GM12878 (cell line): ENCODE measurements at regions of chr1 and their contacts with region 1.

Region 1: GRCh38 chr1:202810615-202811295 is at the start of gene PCAT6:
- DNase-seq: peak; percentile 21
- ATAC-seq: peak; percentile 88
- H3K4me3 ChIP-seq: peak within 1 kb of the TSS; percentile 81
- H3K27ac ChIP-seq: no peak within 1 kb of the TSS
- H3K4me1 ChIP-seq: peaks cover 3% of the 10 kb centered on the region; the same call in 1 of the 2 replicates
- H3K27me3 ChIP-seq: no peaks in the 10 kb centered on the region; a peak in 3 of 4 replicates
- CTCF ChIP-seq: no peak
- EP300 ChIP-seq: 0 out of 4 replicates have a peak, but pooled peaks of 1 of the 2 experiments have one; percentile 5
- POLR2A ChIP-seq: peak; percentile 86
- RAD21 ChIP-seq: no peak
- polyA plus RNA-seq, gene PCAT6: 0.16 TPM in 1 of 2 experiments, not detected in the other

Region 2: DNA sequence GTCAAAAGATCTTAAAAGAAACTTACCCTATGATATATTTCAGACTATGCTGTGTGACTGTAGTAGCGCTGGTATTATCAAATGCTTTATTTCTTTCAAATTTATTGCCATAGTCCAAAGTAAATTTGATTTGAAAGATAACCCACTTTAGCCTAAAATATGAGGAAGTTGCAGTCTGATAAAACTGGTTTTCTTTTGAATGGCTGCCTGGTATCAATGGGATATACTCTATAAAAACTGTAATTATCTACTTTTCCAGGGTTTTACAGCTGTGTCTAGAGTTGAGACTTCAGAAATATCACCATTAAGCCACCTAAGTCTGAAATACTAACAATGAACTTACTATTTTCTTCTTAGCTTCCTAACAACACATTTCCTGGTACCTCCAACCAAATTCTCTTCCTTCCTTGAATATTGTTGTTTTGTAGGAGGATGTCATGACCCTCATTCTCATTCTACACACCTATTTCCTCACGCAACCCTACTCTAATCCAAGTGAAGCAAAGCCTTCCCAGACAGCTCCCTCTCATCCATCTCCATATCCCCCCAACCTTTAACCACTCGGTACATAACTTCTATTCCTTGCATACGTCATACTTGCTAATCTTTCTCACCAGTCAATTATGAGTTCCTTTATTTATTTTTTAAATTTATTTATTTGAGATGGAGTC is 19.5 kb before region 1 on chr1:
- CTCF ChIA-PET with region 1: interaction called, 3 read pairs
- POLR2A ChIA-PET with region 1: interaction called, 6 read pairs
- RAD21 ChIA-PET with region 1: no interaction called
- SMC1A ChIA-PET with region 1: interaction called, 10 read pairs
- in situ Hi-C with region 1: no loop called
- intact Hi-C with region 1: no loop called
- DNase-seq: no peak
- ATAC-seq: no peak
- H3K4me3 ChIP-seq: no peak overlapping the region
- H3K27ac ChIP-seq: no peak overlapping the region
- H3K4me1 ChIP-seq: no peaks in the 10 kb centered on the region
- H3K27me3 ChIP-seq: no peaks in the 10 kb centered on the region
- CTCF ChIP-seq: no peak
- EP300 ChIP-seq: no peak
- POLR2A ChIP-seq: no peak
- RAD21 ChIP-seq: no peak

Region 3: DNA sequence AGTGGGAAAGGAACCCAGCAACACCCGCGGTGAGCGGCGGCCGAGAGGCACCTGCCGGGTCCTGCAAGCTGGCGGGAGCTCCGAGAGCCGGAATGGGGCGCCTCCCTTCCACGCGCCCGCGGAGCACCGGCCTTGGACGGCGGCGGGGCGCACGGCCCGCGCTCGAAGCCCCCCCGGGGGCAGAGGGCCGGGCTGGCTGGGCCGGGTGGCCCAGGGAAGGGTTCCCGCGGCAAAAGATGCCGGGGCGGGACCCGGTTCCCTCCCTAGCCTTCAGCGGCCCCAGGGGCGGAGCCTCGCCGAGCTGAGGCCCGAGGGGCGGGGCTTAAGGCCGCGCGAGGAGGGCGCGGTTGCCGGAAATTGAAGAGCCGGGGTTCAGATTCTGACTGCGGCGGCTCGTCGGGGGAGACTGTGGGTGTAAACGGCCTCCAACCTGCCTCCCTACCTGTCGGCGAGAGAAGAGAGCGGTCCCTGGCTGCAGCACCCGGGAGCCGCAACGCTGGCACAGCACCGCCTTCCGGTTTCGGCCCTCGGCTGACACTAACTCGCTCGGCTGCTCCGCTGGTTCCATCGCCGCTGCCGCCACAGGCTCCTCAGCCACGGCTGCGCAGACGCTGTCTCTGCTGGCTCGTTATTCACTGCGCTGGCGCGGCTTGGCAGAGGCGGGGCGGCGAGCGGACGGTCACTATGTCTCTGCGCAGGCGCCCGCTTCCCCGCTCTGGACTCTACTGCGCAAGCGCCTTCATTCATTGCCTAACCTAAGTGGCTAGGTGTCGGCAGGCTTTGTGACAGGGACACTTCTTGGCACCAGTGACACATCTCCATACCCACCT is 78.0 kb after region 1 on chr1 and contains the start of gene RABIF:
- CTCF ChIA-PET with region 1: interaction called, 3 read pairs
- POLR2A ChIA-PET with region 1: interaction called, 6 read pairs
- RAD21 ChIA-PET with region 1: no interaction called
- SMC1A ChIA-PET with region 1: no interaction called
- in situ Hi-C with region 1: no loop called
- intact Hi-C with region 1: loop called (anchors 1 kb)
- DNase-seq: peak; percentile 88
- ATAC-seq: peak; percentile 97
- H3K4me3 ChIP-seq: peak within 1 kb of the TSS; percentile 79
- H3K27ac ChIP-seq: peak within 1 kb of the TSS; percentile 84
- H3K4me1 ChIP-seq: peaks cover 3% of the 10 kb centered on the region; the same call in 1 of the 2 replicates
- H3K27me3 ChIP-seq: no peaks in the 10 kb centered on the region
- CTCF ChIP-seq: peak in 2 of 3 experiments; percentile 16 to 22; a peak in 2 of 6 replicates
- EP300 ChIP-seq: no peak
- POLR2A ChIP-seq: peak; percentile 97
- RAD21 ChIP-seq: no peak
- polyA plus RNA-seq, gene RABIF: 4.7 to 6.3 TPM

Region 4: DNA sequence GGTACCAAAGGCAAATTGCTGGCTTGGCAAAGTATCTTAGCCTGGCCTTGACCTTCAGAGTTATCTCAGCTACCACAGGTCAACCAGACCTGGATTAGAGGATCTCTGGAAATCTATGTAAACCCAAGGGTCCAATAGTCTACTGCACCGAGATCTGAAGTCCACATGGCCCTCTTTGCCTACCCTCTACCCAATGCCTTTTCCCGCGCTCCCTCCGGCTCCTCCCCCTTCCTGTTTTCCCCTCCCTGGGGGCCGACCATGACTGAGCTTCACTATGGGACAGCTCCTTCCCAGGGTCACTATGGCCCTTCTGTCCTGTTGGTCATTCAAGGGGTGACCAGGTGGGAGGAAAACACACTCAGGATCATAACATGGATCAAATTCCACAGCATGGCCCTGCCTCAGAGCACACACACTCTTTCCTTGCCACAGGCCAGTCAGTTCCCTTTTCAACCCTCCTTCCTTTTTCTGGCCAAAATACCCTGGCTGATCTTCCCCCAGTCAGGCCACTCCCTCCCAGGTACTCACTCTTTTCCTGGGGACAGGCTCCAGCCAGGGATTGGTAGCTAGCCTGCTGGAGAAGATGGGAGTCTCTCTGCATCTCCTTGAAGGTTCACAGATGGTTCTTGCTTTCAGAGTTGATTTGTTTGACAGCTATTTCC is 177.3 kb after region 1 on chr1:
- CTCF ChIA-PET with region 1: no interaction called
- POLR2A ChIA-PET with region 1: interaction called, 12 read pairs
- RAD21 ChIA-PET with region 1: no interaction called
- SMC1A ChIA-PET with region 1: no interaction called
- in situ Hi-C with region 1: no loop called
- intact Hi-C with region 1: no loop called
- DNase-seq: no peak
- ATAC-seq: no peak
- H3K4me3 ChIP-seq: no peak overlapping the region
- H3K27ac ChIP-seq: no peak overlapping the region
- H3K4me1 ChIP-seq: no peaks in the 10 kb centered on the region
- H3K27me3 ChIP-seq: no peaks in the 10 kb centered on the region; a peak in 1 of 4 replicates
- CTCF ChIP-seq: no peak
- EP300 ChIP-seq: no peak
- POLR2A ChIP-seq: no peak
- RAD21 ChIP-seq: no peak

Region 5: DNA sequence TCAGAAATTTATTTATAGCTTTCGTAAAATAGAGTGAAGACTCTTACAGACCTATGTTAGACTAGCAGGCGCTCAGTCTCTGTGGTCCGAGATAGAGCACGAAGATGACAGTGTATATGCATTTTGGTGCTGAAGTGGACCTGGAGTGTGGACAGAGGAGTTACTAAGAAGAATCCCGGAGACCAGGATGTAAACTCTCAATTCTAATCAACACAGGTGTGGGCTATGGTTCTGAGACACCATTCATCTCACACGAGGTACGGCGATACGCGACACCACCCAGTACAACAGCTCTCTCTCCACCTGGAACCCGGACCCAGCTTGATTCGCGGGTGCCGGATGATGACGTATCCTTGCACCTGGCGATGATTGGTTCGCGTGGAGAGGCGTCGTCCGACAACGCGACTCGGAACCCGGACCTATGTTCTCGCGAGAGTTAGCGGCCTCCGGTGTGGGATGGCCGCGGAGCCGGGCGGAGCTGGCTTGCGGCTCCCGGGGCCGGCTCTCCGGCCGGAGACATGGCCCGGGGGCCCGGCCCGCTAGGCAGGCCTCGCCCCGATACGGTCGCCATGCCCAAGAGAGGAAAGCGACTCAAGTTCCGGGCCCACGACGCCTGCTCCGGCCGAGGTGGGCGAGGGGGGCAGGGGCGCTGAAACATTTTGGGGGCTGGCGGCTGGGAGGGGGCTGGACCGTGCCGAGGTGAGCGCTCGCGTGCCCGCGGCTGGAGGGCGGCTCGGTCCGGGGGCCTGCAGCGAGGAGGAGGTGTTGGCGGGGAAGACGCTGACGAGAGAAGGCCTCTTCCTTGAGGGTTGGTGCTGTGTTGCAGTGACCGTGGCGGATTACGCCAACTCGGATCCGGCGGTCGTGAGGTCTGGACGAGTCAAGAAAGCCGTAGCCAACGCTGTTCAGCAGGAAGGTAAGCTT is 196.5 kb after region 1 on chr1 and contains the start of gene TMEM183A:
- CTCF ChIA-PET with region 1: no interaction called
- POLR2A ChIA-PET with region 1: interaction called, 3 read pairs
- RAD21 ChIA-PET with region 1: no interaction called
- SMC1A ChIA-PET with region 1: no interaction called
- in situ Hi-C with region 1: no loop called
- intact Hi-C with region 1: loop called (anchors 10 kb)
- DNase-seq: peak; percentile 92
- ATAC-seq: peak; percentile 91
- H3K4me3 ChIP-seq: peak within 1 kb of the TSS; percentile 99
- H3K27ac ChIP-seq: peak within 1 kb of the TSS; percentile 96
- H3K4me1 ChIP-seq: peaks cover 5% of the 10 kb centered on the region
- H3K27me3 ChIP-seq: no peaks in the 10 kb centered on the region
- CTCF ChIP-seq: no peak
- EP300 ChIP-seq: no peak
- POLR2A ChIP-seq: peak; percentile 95
- RAD21 ChIP-seq: no peak
- polyA plus RNA-seq, gene TMEM183A: 12.3 to 25.0 TPM